ENCODE measurements at regions of chr3 and their contacts with region 1.

Region 1: GRCh38 chr3:152183473-152183872 is 85.3 kb upstream of the MBNL1 start:
- DNase-seq: peak in 6 of 10 donors; percentile 12 to 73 (median 39)

Region 2: GRCh38 chr3:152229692-152230091 is 46.2 kb after region 1 on chr3:
- intact Hi-C with region 1: loop called (anchors 5 kb)
- DNase-seq: no peak

Region 3: DNA sequence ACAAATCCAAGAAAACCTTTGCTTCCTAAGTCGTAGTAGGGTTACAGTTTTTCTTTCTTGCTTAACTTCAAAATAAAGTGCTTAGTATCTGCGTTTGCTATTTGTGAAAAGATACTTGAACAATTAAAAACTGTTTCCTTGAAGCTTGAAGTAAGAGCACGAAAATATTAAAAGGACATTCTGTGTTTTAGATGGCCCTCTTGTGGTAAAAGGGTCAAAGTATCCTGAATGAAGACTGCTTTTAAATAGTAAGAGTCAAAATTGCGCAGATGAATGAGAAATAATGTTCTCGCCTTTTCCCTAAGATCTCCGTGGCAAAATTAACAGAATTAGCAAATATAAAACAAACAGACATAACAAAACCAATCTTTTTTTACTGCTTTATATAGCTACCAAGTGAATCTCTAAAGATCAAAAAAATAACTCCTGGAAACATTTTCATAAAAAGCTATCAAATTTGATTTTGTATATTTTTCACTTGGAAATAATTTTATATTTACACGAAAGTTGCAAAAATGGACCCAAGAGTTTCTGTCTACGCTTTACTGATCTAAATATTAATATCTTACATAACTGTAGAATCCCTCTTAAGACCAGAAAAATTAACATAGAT is 260.7 kb after region 1 on chr3:
- intact Hi-C with region 1: loop called (anchors 5 kb)
- DNase-seq: no peak